Activated CD4-positive, alpha-beta T cell treated with anti-CD3 and anti-CD28 coated beads, Interleukin-2, amount 10 ng/mL, durations not matched to agents 24 days and 14 days (primary cell): ENCODE measurements at regions of chr16 and their contacts with region 1.

Region 1: DNA sequence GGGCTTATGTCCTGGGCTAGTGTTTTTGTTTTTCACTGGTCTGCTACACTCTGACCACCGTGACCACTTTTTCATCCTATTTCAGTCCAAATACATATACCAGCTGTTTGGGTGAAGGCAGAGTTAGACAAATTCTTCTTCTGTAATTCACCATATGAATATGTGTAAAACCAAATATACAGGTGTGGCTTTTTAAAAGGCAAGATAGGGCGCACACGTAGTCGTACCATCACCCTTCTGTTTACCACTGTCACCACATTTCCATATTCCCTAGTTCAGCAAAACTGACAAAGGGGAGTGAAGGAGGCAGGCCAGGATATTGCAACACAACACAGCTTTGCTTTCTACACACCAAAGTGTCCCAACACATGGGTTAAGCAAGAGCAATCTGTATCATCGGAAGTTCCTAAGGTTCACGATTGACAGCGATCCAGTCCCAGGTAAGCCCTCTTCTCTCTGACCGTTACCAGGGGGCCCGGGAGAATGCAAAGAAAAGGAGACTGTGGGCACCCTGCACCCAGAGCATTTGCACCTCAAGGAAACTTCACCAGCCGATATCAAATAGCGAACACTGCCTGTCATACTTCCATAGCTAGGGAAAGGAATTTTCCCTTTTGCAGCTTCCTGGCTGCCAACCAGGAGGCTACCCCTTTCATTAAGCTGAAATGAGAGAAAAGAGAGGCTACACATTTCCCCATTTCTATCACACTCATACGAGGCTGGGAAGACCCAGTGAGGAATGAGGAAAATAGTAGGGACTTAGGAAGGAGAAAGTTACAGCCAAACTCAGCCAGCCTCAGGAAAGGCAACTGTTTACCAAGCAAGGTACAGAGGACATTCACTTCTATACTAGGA is 23.1 kb downstream of the CREBBP start:
- DNase-seq: no peak
- H3K4me3 Mint-ChIP-seq: no peak overlapping the region
- H3K27ac Mint-ChIP-seq: no peak overlapping the region
- H3K4me1 Mint-ChIP-seq: peaks cover 39% of the 10 kb centered on the region
- H3K27me3 Mint-ChIP-seq: no peaks in the 10 kb centered on the region

Region 2: GRCh38 chr16:3656491-3657468 is 200.6 kb before region 1 on chr16:
- intact Hi-C with region 1: no loop called
- DNase-seq: no peak
- H3K4me3 Mint-ChIP-seq: no peak overlapping the region
- H3K27ac Mint-ChIP-seq: no peak overlapping the region
- H3K4me1 Mint-ChIP-seq: peaks cover 14% of the 10 kb centered on the region
- H3K27me3 Mint-ChIP-seq: no peaks in the 10 kb centered on the region

Region 3: GRCh38 chr16:3873482-3874173 is 16.2 kb after region 1 on chr16:
- intact Hi-C with region 1: loop called (anchors 2 kb)
- DNase-seq: no peak
- H3K4me3 Mint-ChIP-seq: no peak overlapping the region
- H3K27ac Mint-ChIP-seq: no peak overlapping the region
- H3K4me1 Mint-ChIP-seq: peaks cover 53% of the 10 kb centered on the region
- H3K27me3 Mint-ChIP-seq: no peaks in the 10 kb centered on the region

Region 4: DNA sequence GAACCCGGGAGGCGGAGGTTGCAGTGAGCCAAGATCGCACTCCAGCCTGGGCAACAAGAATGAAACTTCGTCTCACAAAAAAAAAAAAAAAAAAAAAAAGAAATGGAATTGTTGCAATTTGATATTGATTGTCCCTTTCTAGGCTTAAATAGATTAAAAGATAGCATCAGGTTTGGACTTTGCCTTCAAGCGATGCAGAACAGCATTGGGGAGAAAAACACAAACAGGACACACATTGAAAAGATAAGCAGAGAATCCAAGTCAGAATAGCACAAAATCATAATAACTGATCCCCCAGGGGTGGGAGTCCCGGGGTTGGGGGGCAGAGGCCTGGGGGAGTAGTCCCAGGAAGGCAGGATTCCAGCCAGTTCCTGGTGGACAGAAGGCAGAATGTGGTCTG is 27.0 kb after region 1 on chr16:
- intact Hi-C with region 1: no loop called
- DNase-seq: no peak
- H3K4me3 Mint-ChIP-seq: no peak overlapping the region
- H3K27ac Mint-ChIP-seq: no peak overlapping the region
- H3K4me1 Mint-ChIP-seq: peaks cover 9% of the 10 kb centered on the region
- H3K27me3 Mint-ChIP-seq: peaks cover 22% of the 10 kb centered on the region